Dorsolateral prefrontal cortex (tissue), 120 donors: ENCODE measurements at regions of chr14 and their contacts with region 1.

Region 1: DNA sequence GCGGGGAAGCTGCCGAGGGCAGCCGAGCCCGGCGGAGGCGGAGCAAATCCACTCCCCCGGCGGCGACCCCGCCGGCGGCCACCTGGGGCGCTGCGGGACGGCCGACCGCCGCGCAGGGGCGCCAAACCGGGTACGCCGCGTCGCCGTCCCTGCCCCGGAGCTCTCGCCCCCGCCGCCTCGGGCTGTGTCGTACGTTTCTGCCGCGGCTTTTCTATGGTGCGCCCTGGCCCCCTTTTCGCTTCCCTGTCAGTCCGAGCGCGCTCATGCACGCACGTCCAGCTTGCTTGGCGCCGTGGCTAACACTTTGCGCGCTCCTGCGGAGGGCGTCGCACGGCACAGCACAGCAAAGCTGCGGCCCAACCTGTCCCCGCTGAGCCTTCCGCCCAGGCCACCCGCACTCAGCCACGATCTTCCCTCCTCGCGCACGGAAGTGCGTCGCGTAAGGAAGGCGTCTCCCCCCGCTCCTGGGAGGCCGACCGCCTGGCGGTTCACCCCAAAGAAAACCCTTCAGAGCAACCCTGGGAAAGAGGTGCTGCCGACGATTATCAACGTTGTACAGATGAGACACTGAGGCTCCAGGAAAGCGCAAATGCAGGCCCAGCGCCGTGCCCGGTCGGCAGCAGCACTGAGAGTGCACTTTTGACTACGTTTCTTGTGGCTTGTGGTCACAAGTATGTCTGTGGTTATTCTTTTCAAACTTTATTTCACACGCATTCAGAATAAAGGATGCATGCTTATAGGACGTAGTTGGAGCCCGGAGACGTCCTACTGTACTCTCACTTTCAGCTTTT is at the start of gene HECTD1:
- DNase-seq: peak in 9 of 10 donors; percentile 60 to 89 (median 77)
- H3K4me3 ChIP-seq: peak within 1 kb of the TSS; percentile 50 to 98 (median 90)
- H3K27ac ChIP-seq: peak within 1 kb of the TSS; percentile 92 to 100 (median 99)
- H3K27me3 ChIP-seq: no peaks in the 10 kb centered on the region
- CTCF ChIP-seq: peak in 54 of 56 donors; percentile 17 to 93 (median 66)
- total RNA-seq, gene HECTD1: 137 to 232 (median 183) TPM

Region 2: DNA sequence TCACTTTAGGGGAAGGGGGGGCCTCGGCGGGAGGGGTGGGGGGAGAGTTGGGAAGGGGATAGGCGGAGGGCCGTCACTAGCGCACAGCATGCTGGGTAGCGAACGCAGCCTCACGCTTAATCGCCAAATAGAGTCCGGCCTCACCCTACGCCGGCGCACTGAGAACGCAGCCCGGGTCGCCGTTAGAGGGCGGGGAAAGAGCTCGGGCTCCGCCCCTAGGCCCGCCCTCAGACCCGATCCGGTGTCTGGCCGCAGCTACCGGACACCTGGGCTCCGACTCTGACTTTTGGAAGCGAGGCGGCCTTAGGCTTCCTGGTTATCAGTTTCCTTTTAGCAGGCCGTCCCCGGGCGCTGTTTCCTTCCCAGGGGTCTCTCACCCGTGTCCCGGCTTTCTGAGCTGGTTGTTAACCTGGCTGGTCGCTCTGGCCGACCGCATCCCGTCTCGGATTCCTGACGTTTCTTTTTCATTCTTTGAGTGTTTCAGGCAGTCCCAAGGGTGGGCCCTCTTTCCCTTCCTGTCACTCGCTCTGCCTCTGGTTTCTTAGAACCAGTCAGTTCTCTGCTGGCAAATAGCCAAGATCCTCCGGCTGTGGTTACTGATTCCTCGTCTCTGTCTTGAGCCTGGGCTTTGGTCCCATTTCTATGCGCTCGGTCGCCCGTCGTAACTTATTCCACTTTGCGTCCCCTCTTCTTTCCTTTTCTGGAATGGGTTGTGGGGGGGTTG is 181.4 kb before region 1 on chr14:
- intact Hi-C with region 1: loop called in 1 of 2 experiments (anchors 2 kb)
- DNase-seq: peak; percentile 96 to 98 (median 97)
- H3K4me3 ChIP-seq: peak overlapping the region; percentile 68 to 100 (median 96)
- H3K27ac ChIP-seq: peak overlapping the region; percentile 80 to 99 (median 96)
- H3K27me3 ChIP-seq: no peaks in the 10 kb centered on the region
- CTCF ChIP-seq: peak in 49 of 56 donors; percentile 9 to 63 (median 40)

Region 3: DNA sequence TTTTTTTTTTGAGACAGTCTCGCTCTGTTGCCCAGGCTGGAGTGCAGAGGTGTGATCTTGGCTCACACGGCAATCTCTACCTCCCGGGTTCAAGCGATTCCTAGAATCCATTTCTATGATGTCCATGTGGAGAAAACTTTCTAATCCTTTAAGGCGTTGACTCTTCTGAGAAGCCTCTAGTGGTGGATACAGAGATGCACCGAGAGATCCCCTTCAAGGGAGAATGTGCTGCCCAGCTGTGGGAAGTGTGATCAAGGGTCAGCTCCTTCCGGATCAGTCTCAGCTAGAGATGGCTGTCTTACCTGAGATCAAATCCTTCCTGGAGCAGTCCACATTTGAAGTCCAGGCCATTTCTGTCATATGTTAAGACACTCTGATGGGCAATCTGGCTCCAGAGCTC is 92.3 kb after region 1 on chr14:
- intact Hi-C with region 1: no loop called
- DNase-seq: no peak
- H3K4me3 ChIP-seq: no peak overlapping the region
- H3K27ac ChIP-seq: no peak overlapping the region
- H3K27me3 ChIP-seq: no peaks in the 10 kb centered on the region
- CTCF ChIP-seq: no peak

Region 4: DNA sequence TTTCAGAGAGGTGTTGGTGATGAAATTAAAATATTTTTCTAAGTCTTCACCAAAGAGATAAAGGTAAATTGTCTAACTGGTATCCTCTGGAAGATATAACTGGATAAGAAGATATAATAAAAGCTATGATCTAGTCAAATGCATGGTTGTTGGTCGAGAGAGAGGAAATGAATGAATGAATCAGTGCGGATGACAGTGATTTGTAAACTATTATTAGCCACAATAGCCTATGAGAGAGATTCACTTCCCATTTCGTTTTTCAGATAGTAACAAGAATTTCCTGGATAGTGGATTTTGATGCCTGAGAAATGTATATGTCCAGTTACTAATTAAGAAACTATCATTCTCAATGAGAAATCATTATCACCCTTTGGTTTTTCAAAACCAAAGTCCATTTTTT is 149.3 kb after region 1 on chr14:
- intact Hi-C with region 1: loop called in 1 of 2 experiments (anchors 10 kb)
- DNase-seq: no peak
- H3K4me3 ChIP-seq: no peak overlapping the region
- H3K27ac ChIP-seq: no peak overlapping the region
- H3K27me3 ChIP-seq: no peaks in the 10 kb centered on the region
- CTCF ChIP-seq: no peak

Region 5: DNA sequence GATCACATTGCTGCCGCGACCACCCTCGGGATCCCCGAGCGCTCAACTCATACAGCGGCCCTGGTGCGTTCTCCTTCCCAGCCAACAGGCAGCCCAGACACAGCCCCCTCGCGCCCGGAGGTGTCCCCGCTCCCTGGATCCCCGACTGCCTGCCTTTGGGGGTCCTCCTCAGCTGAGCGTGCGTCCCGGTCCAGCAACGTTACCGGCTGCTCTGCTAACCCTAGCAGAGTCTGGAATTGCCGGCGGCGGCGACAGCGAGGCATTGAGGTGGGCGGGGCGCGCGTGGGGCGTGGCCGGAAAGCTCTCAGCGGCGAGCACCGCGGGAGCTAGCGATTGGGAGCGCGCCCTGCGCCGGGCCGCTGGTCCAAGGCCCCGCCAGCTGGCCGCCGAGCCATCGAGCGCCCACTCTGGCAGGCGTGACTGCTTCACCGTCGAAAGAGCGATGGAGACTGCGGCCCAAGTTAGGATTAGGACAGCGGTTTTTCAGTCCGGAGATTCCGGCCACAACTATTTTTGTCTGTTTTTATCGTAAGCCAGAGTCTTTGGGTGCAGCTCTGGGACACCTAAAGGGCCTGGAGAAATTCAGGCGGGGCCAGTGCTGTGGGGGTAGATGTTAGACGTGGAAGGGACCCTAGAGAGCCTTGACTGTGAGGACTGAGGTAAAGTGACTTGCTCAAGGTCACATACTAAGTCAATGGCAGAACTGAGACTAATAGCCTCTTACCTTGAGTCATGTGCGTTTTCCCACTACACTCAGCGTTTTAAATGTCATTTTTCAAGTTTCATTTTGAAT is 212.6 kb after region 1 on chr14 and contains the start of gene HEATR5A:
- intact Hi-C with region 1: loop called in 1 of 2 experiments (anchors 5 kb)
- DNase-seq: peak; percentile 88 to 96 (median 94)
- H3K4me3 ChIP-seq: peak within 1 kb of the TSS; percentile 60 to 100 (median 91)
- H3K27ac ChIP-seq: peak within 1 kb of the TSS; percentile 3 to 92 (median 79)
- H3K27me3 ChIP-seq: no peaks in the 10 kb centered on the region
- CTCF ChIP-seq: peak in 53 of 56 donors; percentile 20 to 69 (median 49)
- total RNA-seq, gene HEATR5A: 21.3 to 55.7 (median 34.4) TPM

Region 6: DNA sequence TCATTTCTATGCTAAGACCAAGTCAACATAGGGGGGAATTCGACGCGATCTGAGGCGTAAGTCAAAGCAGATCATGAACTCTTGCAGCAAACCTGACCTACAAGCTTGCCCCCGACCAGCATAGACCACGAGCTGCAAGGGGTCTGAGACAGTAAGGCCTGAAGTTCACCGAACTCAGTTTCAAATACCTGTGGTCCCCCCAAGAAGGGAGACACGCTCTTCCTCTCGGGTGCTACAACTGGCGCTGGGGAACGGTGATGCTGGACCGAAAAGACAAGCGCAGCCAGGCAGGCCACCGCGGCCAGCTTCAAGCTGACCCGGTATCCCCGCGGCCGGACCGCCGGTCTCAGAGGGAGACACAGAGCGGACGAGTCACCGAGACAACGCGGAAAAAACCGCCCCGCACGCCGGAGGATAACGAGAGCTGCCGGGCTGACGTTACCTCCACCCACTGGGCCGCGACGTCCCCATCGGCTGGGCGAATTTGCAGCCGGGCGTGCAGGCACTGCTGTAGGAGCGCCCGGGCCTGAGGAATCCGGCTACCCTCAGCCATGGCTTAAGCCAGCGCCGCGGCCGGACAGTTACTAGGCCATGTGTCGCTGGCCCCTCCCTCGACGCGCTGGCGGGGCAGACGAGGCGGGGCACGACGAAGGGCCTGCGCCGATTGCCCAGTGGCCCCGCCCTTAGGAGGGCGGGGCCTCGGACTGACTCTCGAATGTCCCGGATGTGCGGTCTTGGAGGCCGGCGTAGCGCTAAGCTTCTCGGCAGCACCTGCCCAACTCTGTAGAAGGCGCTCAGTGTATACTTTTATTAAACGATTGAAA is 249.1 kb after region 1 on chr14 and contains the start of gene DTD2:
- intact Hi-C with region 1: loop called in 1 of 2 experiments (anchors 5 kb)
- DNase-seq: peak; percentile 94 to 97 (median 96)
- H3K4me3 ChIP-seq: peak within 1 kb of the TSS; percentile 56 to 98 (median 82)
- H3K27ac ChIP-seq: peak within 1 kb of the TSS; percentile 70 to 98 (median 93)
- H3K27me3 ChIP-seq: no peaks in the 10 kb centered on the region
- CTCF ChIP-seq: peak in 38 of 56 donors; percentile 4 to 59 (median 28)
- total RNA-seq, gene DTD2: 11.4 to 33.1 (median 22.2) TPM